Activated CD4-positive, alpha-beta memory T cell treated with anti-CD3 and anti-CD28 coated beads for 36 hours (primary cell): ENCODE measurements at regions of chr11 and their contacts with region 1.

Region 1: GRCh38 chr11:3037040-3037944 is 19.9 kb downstream of the CARS1 start:
- DNase-seq: peak; percentile 61
- H3K4me3 Mint-ChIP-seq: no peak overlapping the region
- H3K27ac Mint-ChIP-seq: peak overlapping the region; percentile 1
- H3K4me1 Mint-ChIP-seq: peaks cover 20% of the 10 kb centered on the region
- H3K27me3 Mint-ChIP-seq: no peaks in the 10 kb centered on the region

Region 2: DNA sequence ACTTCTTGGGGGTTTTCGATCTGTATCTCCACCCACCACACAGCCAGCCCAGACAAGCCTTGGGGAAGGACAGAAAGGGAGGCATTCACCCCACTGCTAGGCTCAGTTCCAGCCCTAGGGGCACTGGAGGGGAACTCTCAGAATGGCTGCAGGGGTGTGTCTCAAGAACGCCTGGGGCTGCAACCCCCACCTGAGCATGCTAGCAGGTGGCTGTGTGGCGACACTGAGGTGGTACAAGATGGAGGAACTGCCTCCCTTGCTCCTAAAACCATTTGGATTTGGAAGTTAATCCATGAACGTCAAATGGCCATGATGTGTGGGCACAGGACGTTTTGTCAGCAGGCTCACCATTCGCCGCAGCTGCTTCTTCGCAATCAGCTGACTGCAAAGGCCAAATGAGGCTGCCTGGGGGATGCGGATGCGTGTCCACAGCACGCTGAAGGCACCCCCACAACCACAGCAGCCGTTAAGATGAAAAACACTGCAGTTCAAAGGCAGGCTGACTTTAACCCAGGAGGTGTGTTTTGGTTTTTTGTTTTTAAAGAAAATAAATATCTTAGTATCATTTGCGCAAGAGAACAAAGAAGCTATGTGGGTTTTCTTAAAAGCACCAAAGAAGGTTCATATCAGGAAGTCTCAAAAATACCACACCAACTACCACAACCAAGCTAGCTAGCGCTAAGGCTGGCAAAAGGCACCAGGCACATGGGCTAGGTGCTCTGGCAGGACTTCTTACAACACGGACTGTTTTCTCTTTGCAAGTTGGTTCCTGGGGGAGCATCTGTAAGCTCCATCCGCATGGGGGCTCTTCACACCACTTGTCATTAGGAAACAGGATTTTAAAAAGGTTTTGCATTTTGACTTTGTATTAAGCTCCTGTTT is 23.0 kb before region 1 on chr11:
- CTCF ChIA-PET with region 1: interaction called, 10 read pairs
- POLR2A ChIA-PET with region 1: no interaction called
- intact Hi-C with region 1: no loop called
- DNase-seq: peak; percentile 82
- H3K4me3 Mint-ChIP-seq: no peak overlapping the region
- H3K27ac Mint-ChIP-seq: peak overlapping the region; percentile 77
- H3K4me1 Mint-ChIP-seq: peaks cover 55% of the 10 kb centered on the region
- H3K27me3 Mint-ChIP-seq: no peaks in the 10 kb centered on the region

Region 3: GRCh38 chr11:3049430-3050243 is 12.3 kb after region 1 on chr11:
- CTCF ChIA-PET with region 1: interaction called, 23 read pairs
- POLR2A ChIA-PET with region 1: no interaction called
- intact Hi-C with region 1: no loop called
- DNase-seq: peak; percentile 91
- H3K4me3 Mint-ChIP-seq: peak overlapping the region; percentile 40
- H3K27ac Mint-ChIP-seq: peak overlapping the region; percentile 93
- H3K4me1 Mint-ChIP-seq: peaks cover 48% of the 10 kb centered on the region
- H3K27me3 Mint-ChIP-seq: no peaks in the 10 kb centered on the region